ENCODE measurements at regions of chr17 and their contacts with region 1.

Region 1: GRCh38 chr17:80938556-80938955 is 53.1 kb upstream of the CHMP6 start:
- DNase-seq: no peak

Region 2: DNA sequence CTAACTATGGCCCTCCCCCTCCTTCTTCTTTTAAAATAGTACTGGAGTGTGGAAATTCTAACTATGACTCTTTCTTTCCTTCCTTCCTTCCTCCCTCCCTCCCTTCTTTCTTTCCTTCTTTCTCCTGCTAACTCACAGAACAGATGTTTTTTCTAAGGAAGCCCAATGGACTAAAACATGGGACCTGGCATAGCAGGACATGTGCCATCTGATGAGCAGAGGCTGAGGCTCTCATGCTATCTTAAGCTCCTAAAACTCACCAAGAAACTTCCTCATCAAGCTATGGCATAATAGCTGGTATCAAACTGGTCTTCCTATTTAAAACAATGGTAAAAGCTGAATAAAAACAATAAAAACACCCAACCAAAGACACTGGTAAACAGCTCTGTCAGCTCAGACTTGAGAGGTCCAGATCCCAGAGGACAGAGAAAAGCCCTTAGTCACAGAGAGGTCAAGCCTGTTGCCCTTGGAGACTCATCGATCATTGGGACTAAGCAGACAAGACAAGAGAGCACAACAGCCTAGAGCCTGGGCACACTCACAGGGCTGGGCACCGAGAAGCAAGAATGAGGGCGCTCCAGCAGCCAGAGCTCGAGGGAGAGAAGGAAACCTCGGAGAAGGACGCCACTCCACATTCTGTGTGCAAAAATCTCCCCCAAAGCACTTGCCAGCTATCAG is 329.0 kb after region 1 on chr17:
- intact Hi-C with region 1: loop called in 1 of 2 experiments (anchors 5 kb)
- DNase-seq: no peak

Measured in posterior vena cava (tissue), 2 donors.